ENCODE measurements at regions of chr10 and their contacts with region 1.

Region 1: GRCh38 chr10:70558871-70559810 is 43.4 kb downstream of the PRF1 start:
- DNase-seq: peak; percentile 88
- ATAC-seq: peak; percentile 96
- H3K4me3 Mint-ChIP-seq: peak overlapping the region; percentile 69
- H3K27ac Mint-ChIP-seq: peak overlapping the region; percentile 89
- H3K4me1 Mint-ChIP-seq: peaks cover 56% of the 10 kb centered on the region
- H3K27me3 Mint-ChIP-seq: no peaks in the 10 kb centered on the region

Region 2: GRCh38 chr10:70584909-70585544 is 25.9 kb after region 1 on chr10:
- CTCF ChIA-PET with region 1: interaction called, 20 read pairs
- POLR2A ChIA-PET with region 1: interaction called, 3 read pairs
- DNase-seq: no peak
- ATAC-seq: peak; percentile 49
- H3K4me3 Mint-ChIP-seq: no peak overlapping the region
- H3K27ac Mint-ChIP-seq: peak overlapping the region; percentile 37
- H3K4me1 Mint-ChIP-seq: peaks cover 25% of the 10 kb centered on the region
- H3K27me3 Mint-ChIP-seq: peaks cover 7% of the 10 kb centered on the region

Region 3: DNA sequence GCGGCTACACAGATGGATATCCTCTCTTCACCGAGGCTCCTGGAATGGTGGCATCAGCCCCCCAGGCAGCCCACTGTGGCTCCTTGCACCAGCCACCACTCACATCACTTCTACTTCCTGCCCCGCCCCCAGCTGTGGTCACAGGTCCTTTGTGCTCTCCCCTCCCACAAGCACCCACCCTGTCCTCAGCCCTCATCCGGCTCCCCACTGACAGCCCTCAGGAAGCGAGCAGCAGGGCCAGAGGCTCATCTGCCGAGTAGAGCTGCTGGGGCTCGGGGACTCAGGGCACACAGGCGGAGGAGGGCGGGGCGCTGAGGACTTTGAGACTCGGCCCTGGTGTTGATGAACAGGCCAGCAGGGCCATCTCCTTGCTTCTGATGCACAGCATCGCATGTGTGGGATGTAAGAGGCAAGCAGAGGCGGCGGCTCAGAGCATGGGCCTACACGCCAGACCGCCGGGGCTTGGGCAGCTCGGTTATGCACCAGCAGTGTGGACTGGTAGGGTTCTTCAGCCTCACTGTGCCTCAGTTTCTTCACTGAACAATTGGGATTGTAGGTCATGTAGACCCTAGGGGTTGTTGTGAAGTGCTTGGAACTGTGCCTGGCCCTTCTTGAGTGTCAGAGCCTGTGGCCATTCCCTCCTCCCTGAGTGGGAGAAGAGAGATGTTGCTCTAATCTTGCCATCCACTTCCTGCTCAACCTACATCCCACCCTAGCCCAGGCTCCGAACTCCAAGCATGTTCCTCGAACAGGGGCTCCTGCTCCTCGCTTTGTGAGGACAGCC is 43.7 kb after region 1 on chr10 and contains the start of gene PRF1:
- CTCF ChIA-PET with region 1: interaction called, 40 read pairs
- POLR2A ChIA-PET with region 1: interaction called, 6 read pairs
- DNase-seq: peak; percentile 97
- ATAC-seq: peak; percentile 95
- H3K4me3 Mint-ChIP-seq: peak within 1 kb of the TSS; percentile 96
- H3K27ac Mint-ChIP-seq: peak within 1 kb of the TSS; percentile 93
- H3K4me1 Mint-ChIP-seq: peaks cover 67% of the 10 kb centered on the region
- H3K27me3 Mint-ChIP-seq: no peaks in the 10 kb centered on the region
- total RNA-seq, gene PRF1: 265 to 272 TPM

Region 4: DNA sequence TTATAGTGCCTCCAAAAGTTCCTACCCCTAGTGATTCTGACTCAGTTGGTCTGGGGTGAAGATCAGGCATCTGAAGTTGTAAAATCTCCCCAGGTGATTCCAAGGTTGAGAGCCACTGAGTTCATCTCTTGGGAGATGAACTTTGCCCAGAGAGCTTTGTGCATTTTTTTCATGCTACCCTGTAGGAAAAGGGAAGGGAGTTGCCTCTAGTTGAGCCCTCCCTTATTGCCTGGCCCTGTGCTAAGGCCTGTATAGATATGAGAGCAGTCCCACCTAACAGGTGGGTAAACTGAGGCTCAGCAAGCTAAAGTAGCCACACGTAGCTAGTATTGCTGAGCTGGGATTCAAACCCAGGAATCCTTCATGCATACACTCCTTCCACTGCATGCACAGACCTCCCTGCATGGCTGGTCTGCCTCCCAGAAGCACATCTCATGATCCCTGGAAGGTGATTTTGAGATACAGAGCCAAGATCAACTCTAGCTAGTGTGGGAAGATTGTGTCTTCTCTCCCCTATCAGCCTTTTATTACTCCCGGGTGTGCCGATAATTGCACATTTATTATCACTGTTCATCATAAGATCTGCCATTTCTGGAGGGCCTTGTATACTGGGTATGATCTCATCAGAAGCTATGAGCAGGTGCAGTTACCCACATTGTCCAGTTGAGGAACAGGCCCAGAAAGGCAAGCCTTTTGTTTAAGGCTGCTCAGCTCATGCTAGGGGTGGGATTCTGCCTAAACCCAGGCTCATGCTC is 179.0 kb after region 1 on chr10:
- CTCF ChIA-PET with region 1: interaction called, 15 read pairs
- POLR2A ChIA-PET with region 1: interaction called, 4 read pairs
- DNase-seq: no peak
- ATAC-seq: no peak
- H3K4me3 Mint-ChIP-seq: no peak overlapping the region
- H3K27ac Mint-ChIP-seq: no peak overlapping the region
- H3K4me1 Mint-ChIP-seq: peaks cover 19% of the 10 kb centered on the region
- H3K27me3 Mint-ChIP-seq: no peaks in the 10 kb centered on the region

Region 5: GRCh38 chr10:70771311-70772099 is 212.4 kb after region 1 on chr10:
- CTCF ChIA-PET with region 1: no interaction called
- POLR2A ChIA-PET with region 1: no interaction called
- DNase-seq: no peak
- ATAC-seq: no peak
- H3K4me3 Mint-ChIP-seq: no peak overlapping the region
- H3K27ac Mint-ChIP-seq: no peak overlapping the region
- H3K4me1 Mint-ChIP-seq: no peaks in the 10 kb centered on the region
- H3K27me3 Mint-ChIP-seq: peaks cover 17% of the 10 kb centered on the region

Region 6: DNA sequence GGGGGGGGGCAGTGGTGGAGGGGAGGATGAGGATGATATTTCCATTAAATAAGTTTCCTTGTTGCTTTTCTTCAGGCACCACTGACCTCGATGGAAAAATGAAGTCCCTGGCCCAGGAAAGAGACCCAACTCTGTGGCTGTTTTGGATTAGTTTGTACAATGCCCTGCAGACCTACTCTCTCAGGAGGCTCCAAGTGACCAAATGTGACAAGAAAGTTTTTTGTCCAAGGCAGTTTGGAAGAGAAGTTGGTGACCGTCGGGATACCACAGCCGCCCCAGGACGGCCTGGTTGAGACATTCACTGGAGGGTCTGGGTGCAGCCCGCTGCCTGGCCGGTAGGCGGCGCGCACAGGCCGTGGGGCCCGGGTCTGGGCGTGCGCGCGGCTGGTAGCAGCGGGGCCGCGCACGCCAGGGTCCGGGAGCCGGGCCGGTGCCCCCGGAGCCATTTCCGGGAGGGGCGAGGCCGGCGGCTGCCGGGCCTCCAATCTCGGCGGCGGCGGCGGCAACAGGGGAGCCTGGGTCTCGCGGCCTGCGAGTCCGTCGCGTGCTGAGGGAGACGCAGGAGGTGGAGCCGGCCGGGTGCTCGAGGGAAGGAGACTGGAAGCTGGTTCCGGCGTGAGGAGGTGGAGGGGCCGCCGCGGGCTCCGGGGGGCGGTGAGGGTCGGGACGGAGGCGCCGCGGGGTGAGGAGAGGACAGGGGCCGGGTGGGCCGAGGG is 256.5 kb after region 1 on chr10 and contains the start of gene SGPL1:
- CTCF ChIA-PET with region 1: interaction called, 11 read pairs
- POLR2A ChIA-PET with region 1: no interaction called
- DNase-seq: peak; percentile 87
- ATAC-seq: peak; percentile 92
- H3K4me3 Mint-ChIP-seq: peak within 1 kb of the TSS; percentile 85
- H3K27ac Mint-ChIP-seq: peak within 1 kb of the TSS; percentile 80
- H3K4me1 Mint-ChIP-seq: peaks cover 15% of the 10 kb centered on the region
- H3K27me3 Mint-ChIP-seq: no peaks in the 10 kb centered on the region
- total RNA-seq, gene SGPL1: 22.2 to 28.0 TPM